ENCODE measurements at regions of chr11 and their contacts with region 1.

Region 1: GRCh38 chr11:14454861-14455632 is 44.6 kb downstream of the COPB1 start:
- DNase-seq: no peak
- ATAC-seq: peak in 3 of 4 donors; percentile 44 to 53 (median 45)
- H3K4me3 ChIP-seq: no peak overlapping the region
- H3K27ac ChIP-seq: no peak overlapping the region
- H3K4me1 ChIP-seq: peaks cover 0 to 8% (median 0%) of the 10 kb centered on the region in 12 donors
- H3K27me3 ChIP-seq: no peaks in the 10 kb centered on the region
- CTCF ChIP-seq: peak; percentile 46 to 74 (median 63)
- POLR2A ChIP-seq: no peak

Region 2: DNA sequence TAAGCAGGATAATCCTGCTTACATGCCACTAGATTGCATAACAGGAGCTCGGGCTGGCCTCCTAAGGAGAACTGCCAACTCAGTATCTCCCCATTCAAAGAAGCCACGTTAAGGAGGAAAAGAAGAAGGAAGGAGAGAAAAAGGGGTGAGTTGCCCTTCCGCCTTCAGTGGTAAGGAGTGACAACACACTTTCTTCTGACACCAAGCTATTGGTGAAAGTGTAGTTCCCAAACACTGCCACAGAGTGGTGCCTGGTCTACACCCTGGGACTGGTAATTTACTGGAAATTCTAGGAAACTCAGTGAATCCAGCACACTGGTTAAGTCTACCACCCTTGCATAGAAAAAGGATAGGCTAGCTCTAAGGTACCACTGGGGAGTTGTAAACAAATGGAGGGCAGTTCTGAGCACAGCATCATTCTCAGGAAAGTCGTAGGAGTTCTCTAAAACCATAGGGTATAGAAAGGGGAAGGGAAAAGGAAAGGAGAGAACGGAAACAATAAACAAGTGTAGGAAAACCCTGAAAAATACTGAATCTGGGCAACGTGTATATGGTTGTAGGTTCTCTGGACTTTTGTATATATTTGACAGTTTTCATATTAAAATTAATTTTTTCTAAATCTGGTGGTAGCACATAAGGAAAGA is 154.3 kb before region 1 on chr11:
- intact Hi-C with region 1: loop called (anchors 1 to 5 kb)
- DNase-seq: peak in 4 of 5 donors; percentile 32 to 40 (median 37)
- ATAC-seq: peak; percentile 76 to 93 (median 91)
- H3K4me3 ChIP-seq: no peak overlapping the region
- H3K27ac ChIP-seq: no peak overlapping the region
- H3K4me1 ChIP-seq: peaks cover 0 to 41% (median 15%) of the 10 kb centered on the region in 12 donors
- H3K27me3 ChIP-seq: no peaks in the 10 kb centered on the region
- CTCF ChIP-seq: peak; percentile 67 to 83 (median 76)
- POLR2A ChIP-seq: no peak